Activated CD4-positive, alpha-beta memory T cell treated with anti-CD3 and anti-CD28 coated beads for 36 hours (primary cell): ENCODE measurements at regions of chr4 and their contacts with region 1.

Region 1: DNA sequence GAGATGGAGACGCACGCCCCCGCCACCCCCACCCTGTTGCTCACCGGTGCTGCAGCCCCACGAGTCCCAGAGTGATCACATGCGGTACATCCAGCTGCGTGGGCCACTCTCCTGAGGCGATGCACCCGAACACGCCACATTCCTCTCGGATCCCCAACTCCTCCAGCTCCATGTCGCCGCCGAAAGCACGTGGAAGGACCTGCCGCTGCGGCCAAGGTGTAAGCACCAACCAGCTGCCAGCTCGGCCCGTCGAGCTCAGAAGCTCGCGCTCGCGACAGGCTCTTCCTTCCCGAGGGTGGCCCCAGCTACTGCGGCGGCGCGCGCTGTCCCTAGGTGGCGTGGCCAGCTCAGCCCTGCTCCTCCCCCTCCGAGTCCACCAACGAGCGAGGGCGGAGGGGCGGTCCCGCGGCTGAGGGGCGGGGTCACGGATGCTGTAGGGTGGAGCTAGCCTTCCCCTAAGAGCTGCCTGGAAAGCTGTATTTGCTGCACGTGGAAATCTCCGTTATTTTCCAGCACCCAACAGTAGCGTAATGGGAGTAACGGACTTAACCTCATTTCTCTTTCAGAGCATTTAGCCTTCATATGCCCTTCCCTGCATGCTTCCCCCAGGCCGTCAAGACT is at the start of gene PPAT:
- DNase-seq: peak; percentile 99
- H3K4me3 Mint-ChIP-seq: peak within 1 kb of the TSS; percentile 98
- H3K27ac Mint-ChIP-seq: peak within 1 kb of the TSS; percentile 95
- H3K4me1 Mint-ChIP-seq: peaks cover 39% of the 10 kb centered on the region
- H3K27me3 Mint-ChIP-seq: no peaks in the 10 kb centered on the region
- total RNA-seq, gene PPAT: 34.4 to 37.7 TPM

Region 2: DNA sequence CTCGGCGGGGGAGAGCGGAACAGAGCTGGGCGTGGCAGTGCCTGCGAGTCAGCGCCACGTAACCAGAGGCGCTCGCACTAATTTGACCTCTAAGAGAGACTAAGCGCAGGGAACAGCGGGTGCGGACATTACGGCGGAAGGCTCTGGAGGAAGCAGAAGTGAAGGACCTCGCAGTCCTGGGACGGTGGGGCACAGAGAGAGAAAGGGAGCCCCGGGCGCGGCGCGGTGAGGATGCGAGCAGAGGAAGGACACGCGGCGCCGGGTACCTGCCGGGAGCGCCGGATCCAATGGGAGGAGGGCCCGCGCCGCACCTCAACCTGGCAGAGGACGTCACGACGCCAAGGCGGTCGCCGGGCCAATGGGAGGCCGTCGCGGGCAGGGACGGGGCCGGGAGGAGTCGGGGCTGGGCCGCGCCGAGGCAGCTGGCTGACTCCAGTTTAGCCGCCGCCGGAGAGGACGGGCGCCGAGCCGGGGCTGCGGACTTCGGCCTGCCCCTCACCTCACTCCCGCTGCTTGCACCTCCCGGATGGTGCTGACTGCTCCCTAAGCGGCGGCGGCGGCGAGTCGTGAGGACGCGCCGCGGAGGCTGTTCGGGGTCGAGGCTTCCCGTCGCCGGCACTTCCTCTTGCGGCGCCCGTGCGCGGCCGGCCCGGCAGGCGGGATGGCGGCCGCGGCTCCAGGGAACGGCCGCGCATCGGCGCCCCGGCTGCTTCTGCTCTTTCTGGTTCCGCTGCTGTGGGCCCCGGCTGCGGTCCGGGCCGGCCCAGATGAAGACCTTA is 1039.7 kb before region 1 on chr4 and contains the start of gene TMEM165:
- CTCF ChIA-PET with region 1: no interaction called
- POLR2A ChIA-PET with region 1: no interaction called
- intact Hi-C with region 1: loop called (anchors 5 kb)
- DNase-seq: peak; percentile 94
- H3K4me3 Mint-ChIP-seq: peak within 1 kb of the TSS; percentile 90
- H3K27ac Mint-ChIP-seq: peak within 1 kb of the TSS; percentile 93
- H3K4me1 Mint-ChIP-seq: peaks cover 30% of the 10 kb centered on the region
- H3K27me3 Mint-ChIP-seq: no peaks in the 10 kb centered on the region
- total RNA-seq, gene TMEM165: 50.4 to 56.8 TPM

Region 3: DNA sequence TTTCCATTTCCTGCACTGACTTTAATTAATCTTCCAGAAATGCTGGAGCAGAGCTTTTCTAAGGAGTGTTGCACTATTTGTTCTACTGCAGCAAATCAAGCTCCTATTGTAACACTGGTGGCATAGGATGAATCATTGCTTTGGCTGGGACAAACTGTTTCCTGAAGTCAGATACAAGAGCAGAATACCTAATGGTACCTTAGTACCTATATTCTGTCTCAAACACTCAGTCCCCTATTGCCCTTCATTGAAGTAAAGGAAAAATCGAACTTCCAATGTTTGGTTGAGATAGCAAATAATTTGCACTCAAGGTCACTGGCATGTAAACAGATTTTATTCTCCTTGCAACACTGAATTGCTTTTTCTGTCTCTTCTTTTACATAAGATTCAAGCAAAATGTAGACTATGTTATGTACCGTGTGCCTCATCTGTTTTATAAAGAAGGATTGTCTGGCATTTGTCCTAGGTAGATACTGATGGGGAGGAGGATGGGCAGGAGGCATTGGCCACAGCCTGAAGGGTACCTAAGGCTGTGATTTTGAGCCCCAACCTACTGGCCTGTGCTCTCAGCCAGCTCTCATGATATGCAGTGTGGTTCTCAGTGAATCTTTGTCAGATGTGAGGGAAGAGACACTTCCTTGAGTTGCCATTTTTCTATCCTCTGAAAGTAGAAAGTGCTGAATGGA is 189.7 kb before region 1 on chr4:
- CTCF ChIA-PET with region 1: no interaction called
- POLR2A ChIA-PET with region 1: no interaction called
- intact Hi-C with region 1: no loop called
- DNase-seq: no peak
- H3K4me3 Mint-ChIP-seq: no peak overlapping the region
- H3K27ac Mint-ChIP-seq: no peak overlapping the region
- H3K4me1 Mint-ChIP-seq: no peaks in the 10 kb centered on the region
- H3K27me3 Mint-ChIP-seq: peaks cover 6% of the 10 kb centered on the region

Region 4: GRCh38 chr4:56387023-56388001 is 48.1 kb before region 1 on chr4 and contains the start of gene AASDH:
- CTCF ChIA-PET with region 1: interaction called, 12 read pairs
- POLR2A ChIA-PET with region 1: interaction called, 75 read pairs
- intact Hi-C with region 1: loop called (anchors 1 kb)
- DNase-seq: peak; percentile 97
- H3K4me3 Mint-ChIP-seq: peak within 1 kb of the TSS; percentile 93
- H3K27ac Mint-ChIP-seq: peak within 1 kb of the TSS; percentile 99
- H3K4me1 Mint-ChIP-seq: peaks cover 30% of the 10 kb centered on the region
- H3K27me3 Mint-ChIP-seq: no peaks in the 10 kb centered on the region
- total RNA-seq, gene AASDH: 12.0 to 16.6 TPM

Region 5: DNA sequence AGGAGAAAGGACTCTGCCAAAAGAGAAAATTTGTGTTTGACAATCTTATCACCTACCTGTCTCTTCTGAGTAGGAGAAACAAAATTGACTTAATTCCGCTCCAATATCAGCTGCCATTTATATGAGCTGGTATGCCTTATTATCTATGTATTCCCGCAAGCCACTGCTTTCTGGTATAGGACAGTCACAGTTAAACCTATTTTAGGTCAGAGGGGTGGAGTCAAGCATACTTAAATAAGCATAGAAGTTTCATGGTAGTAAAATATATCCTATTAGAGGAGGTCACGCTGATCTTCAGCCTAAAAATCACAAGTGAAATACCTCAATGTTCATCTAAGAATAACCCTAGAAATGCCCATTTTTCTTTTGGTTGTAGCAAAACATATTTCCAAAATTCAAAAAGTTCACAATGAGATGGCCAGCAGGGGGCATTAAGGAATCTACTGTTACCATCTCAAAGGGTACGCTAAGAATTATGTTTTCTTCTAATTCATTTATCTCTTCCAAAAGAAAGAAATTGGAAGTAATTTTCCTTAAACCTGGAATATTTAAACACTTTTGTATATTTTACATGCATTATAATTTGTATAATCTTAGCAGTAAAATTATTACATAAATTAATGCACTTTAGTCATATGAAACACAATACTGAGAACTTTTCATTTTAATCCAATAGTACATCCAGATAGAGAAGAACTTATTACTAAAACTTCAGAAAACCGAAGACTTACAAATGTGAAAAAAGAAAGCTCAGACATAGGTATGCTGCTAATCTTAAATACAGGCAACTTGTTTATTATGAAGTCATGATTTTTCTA is 10.5 kb before region 1 on chr4:
- CTCF ChIA-PET with region 1: interaction called, 43 read pairs
- POLR2A ChIA-PET with region 1: interaction called, 4 read pairs
- intact Hi-C with region 1: loop called (anchors 1 kb)
- DNase-seq: no peak
- H3K4me3 Mint-ChIP-seq: no peak overlapping the region
- H3K27ac Mint-ChIP-seq: no peak overlapping the region
- H3K4me1 Mint-ChIP-seq: peaks cover 16% of the 10 kb centered on the region
- H3K27me3 Mint-ChIP-seq: no peaks in the 10 kb centered on the region

Region 6: GRCh38 chr4:56530269-56531148 is 95.1 kb after region 1 on chr4:
- CTCF ChIA-PET with region 1: no interaction called
- POLR2A ChIA-PET with region 1: no interaction called
- intact Hi-C with region 1: loop called (anchors 1 kb)
- DNase-seq: peak; percentile 90
- H3K4me3 Mint-ChIP-seq: peak overlapping the region; percentile 58
- H3K27ac Mint-ChIP-seq: no peak overlapping the region
- H3K4me1 Mint-ChIP-seq: peaks cover 4% of the 10 kb centered on the region
- H3K27me3 Mint-ChIP-seq: peaks cover 10% of the 10 kb centered on the region

Region 7: DNA sequence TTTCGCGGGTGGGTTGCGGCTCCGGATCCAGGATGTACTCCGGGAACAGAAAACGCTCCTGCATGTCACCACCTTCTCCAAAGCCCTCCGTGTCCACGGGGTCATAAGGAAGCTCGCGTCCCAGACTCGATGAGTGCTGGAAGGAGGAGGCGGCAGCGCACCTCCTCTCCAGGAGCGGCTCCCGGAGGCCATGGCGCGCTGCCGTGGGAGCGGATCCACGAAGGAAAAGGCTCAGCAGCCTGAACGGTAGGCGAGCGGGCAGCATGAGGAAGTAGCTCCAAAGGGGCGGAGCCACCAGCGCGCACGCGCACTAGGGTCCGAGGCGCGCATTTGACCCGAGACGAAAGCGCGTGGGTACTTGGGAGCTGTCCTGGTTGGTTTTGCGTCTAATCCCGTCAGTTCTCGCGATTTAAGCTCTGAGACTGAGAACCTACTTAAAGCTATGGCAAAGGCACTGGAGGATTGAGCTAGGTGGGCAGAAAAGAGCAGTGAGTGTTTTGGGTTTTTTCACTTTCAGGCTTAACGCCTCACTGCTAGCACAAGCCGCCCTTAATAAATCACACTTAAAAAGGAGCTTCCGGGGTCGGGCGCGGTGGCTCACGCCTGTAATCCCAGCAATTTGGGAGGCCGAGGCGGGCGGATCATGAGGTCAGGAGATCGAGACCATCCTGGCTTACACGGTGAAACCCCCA is 542.1 kb after region 1 on chr4 and contains the start of gene NOA1:
- CTCF ChIA-PET with region 1: interaction called, 7 read pairs
- POLR2A ChIA-PET with region 1: interaction called, 30 read pairs
- intact Hi-C with region 1: loop called (anchors 1 kb)
- DNase-seq: peak; percentile 99
- H3K4me3 Mint-ChIP-seq: peak within 1 kb of the TSS; percentile 98
- H3K27ac Mint-ChIP-seq: peak within 1 kb of the TSS; percentile 99
- H3K4me1 Mint-ChIP-seq: peaks cover 52% of the 10 kb centered on the region
- H3K27me3 Mint-ChIP-seq: no peaks in the 10 kb centered on the region
- total RNA-seq, gene NOA1: 25.0 to 26.6 TPM

Region 8: DNA sequence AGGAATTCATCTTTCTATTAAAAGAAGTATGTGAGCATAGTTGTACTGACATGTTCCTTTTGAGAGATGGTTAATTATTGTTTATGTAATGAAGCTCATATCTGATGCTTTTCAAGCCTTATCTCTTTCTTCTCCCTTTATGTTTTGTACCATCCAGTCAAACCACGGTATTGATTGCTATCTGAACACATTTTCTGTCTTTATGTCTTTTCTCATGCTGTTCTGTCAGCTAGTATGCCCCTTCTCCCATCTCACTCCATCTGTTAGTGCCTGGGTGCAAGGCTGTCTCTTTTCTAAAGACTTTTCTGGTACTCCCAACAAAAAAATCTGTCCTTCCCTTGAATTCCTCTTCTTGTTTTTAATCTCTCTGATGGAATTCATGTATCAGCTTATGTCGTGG is 1558.5 kb after region 1 on chr4:
- CTCF ChIA-PET with region 1: no interaction called
- POLR2A ChIA-PET with region 1: no interaction called
- intact Hi-C with region 1: no loop called
- DNase-seq: no peak
- H3K4me3 Mint-ChIP-seq: no peak overlapping the region
- H3K27ac Mint-ChIP-seq: no peak overlapping the region
- H3K4me1 Mint-ChIP-seq: no peaks in the 10 kb centered on the region
- H3K27me3 Mint-ChIP-seq: no peaks in the 10 kb centered on the region